Sciatic nerve (tissue), 2 donors: ENCODE measurements at regions of chr15 and their contacts with region 1.

Region 1: DNA sequence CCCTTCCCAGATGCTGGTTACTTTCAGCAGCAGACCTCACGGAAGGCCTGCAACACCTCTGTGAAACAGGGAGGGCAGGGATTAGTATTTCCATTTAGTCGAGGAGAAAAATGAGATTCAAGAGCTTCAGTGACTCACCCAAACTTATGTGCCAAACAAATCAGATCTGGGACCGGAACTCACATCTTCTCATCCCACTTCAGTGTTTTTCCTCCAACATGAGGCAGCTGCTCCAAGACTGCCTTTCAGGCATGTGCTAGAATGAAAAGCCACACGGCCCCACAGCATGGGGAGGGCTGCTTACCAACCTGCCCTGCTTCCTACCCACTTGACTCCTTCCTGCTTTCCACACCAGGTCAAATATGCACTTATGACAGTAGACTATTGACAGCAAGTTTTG is 129.4 kb upstream of the SLC24A5 start:
- DNase-seq: no peak
- ATAC-seq: peak; percentile 51

Region 2: DNA sequence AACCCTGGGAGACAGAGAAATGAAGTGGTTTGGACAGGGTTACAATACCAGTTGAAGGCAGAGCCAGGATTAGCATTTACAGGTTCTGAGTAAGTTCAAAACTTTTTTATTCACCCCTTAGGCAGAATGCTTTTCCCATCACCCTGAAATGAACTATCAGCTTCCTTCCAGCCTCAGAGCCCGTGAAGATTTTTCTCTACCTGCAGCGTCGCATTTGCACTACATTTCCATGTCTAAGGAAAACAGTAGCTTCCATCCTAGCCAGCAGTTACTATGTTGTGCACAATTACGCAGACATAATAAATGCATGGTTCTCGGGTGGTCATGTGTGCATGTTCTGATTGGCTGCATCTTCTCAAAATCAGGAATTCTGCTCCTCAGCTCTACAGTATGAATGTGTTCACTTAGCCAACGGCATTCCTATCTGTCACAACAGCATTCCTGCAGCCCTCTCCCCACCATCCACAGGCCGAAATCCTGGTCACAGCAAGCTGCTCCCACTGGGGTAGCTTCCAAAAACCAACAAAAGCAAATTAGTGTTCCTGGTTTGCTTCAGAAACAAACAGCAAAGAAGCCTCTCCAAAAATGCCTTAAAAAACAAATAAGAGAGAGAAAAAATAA is 784.9 kb before region 1 on chr15:
- intact Hi-C with region 1: loop called (anchors 10 kb)
- DNase-seq: no peak
- ATAC-seq: no peak

Region 3: DNA sequence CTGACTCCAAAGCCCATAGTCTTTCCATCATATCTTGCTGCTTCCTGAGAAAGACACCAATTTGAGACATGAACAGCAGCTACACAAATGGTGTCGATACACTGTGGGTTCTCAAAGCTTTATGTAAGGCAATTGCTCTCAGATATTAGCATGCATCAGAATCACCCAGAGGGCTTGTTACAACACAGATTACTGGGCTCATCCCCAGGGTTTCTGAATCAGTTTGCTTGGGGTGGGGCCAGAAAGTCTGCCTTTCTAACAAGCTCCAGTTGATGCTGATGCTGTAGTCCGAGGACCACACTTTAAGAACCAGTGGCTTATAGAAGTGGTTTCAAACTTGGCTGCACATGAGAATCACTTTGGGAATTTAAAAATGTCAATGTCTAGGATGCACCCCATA is 187.6 kb before region 1 on chr15:
- intact Hi-C with region 1: no loop called
- DNase-seq: no peak
- ATAC-seq: no peak

Region 4: GRCh38 chr15:48221885-48222284 is 230.5 kb after region 1 on chr15:
- intact Hi-C with region 1: no loop called
- DNase-seq: no peak
- ATAC-seq: no peak

Region 5: DNA sequence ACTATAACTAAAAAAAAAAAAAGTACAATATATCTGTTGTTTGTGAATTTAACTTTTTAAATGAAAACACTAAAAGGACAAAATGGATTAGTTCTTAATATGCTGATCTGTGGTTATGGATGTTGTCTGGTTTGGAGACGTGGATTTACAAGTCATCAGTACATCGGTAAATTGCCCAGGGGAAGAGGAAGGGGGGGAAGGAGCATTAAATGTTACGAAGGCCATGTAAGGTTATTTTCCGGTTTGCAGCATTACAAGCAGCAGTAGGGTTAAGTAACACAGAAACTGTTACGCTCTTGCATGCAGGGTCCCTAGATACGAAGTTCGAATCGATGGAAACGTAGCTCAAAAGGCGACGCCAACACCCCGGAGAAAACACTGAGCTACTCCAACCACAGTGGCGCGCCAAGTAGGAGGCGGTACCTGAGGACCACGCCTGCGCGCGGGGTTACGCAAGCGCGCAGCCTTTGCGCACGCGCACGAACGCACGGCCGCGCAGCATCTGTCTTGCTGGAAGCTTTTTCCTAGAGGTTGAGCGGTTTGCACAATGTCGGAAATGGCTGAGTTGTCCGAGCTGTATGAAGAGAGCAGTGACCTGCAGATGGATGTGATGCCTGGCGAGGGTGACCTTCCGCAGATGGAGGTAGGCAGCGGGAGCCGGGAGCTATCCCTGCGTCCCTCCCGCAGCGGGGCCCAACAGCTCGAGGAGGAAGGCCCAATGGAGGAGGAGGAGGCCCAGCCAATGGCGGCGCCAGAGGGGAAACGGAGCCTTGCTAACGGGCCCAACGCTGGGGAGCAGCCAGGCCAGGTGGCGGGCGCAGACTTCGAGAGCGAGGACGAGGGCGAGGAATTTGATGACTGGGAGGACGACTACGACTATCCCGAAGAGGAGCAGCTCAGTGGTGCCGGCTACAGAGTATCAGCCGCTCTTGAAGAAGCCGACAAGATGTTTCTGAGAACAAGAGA is 886.6 kb after region 1 on chr15 and contains the start of gene EID1:
- intact Hi-C with region 1: no loop called
- DNase-seq: peak; percentile 96
- ATAC-seq: peak; percentile 99
- total RNA-seq, gene EID1: 140 TPM